AG04450 (cell line): ENCODE measurements at regions of chr16 and their contacts with region 1.

Region 1: GRCh38 chr16:8655184-8655717 is 19.2 kb upstream of the ABAT start:
- DNase-seq: no peak
- H3K4me3 ChIP-seq: no peak overlapping the region
- H3K27ac ChIP-seq: no peak overlapping the region
- H3K27me3 ChIP-seq: peaks cover 6% of the 10 kb centered on the region
- CTCF ChIP-seq: peak; percentile 54

Region 2: DNA sequence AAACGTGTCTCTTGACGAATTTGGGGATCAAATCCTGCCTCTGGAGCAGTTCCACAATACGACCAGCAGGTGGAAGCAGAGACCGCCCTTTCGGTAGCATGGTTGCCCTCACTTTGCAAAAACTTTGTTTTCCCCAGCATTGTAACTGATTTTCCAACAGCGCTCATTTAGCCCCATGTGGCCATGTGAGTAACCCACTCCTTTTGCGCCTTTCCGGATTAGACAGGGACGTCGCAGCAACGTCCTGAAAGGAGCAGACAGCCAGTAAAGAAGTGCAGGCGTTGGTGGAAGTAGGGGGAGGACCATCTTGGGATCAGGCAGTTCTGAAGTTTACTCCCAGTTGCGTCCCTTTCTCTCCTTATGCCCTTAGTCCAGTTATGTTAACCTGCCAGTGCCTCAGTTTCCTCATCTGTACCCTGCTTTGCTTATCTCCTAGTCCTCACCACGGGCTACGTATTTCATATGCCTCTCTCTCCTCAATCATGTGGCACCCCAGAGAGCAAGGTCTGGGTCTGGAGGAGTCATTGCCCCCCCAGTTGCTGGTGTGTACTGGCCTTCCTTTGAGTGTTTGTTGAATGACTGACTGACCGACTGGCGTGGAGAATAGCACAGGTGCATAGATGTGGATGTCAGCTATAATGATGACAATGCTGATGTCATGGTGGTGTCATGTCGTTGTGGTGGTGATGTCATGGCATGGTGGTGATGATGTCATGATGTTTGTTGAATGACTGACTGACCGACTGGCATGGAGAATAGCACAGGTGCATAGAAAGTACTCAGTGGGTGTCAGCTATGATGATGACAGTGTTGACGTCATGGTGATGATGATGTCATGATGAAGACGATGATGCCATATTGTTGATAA is 87.3 kb before region 1 on chr16:
- CTCF ChIA-PET with region 1: interaction called, 15 read pairs
- POLR2A ChIA-PET with region 1: no interaction called
- DNase-seq: peak; percentile 74
- H3K4me3 ChIP-seq: no peak overlapping the region
- H3K27ac ChIP-seq: peak overlapping the region; percentile 21
- H3K27me3 ChIP-seq: no peaks in the 10 kb centered on the region
- CTCF ChIP-seq: peak; percentile 99

Region 3: GRCh38 chr16:8691728-8692127 is 36.5 kb after region 1 on chr16:
- CTCF ChIA-PET with region 1: no interaction called
- POLR2A ChIA-PET with region 1: no interaction called
- DNase-seq: no peak
- H3K4me3 ChIP-seq: no peak overlapping the region
- H3K27ac ChIP-seq: no peak overlapping the region
- H3K27me3 ChIP-seq: no peaks in the 10 kb centered on the region
- CTCF ChIP-seq: no peak